ENCODE measurements at regions of chr15 and their contacts with region 1.

Region 1: GRCh38 chr15:89496155-89497098 is at the start of gene RHCG:
- DNase-seq: peak; percentile 82 to 85
- H3K4me3 ChIP-seq: peak within 1 kb of the TSS; percentile 40
- H3K4me3 Mint-ChIP-seq: peak within 1 kb of the TSS; percentile 68
- H3K27ac Mint-ChIP-seq: no peak within 1 kb of the TSS
- H3K4me1 ChIP-seq: no peaks in the 10 kb centered on the region
- H3K4me1 Mint-ChIP-seq: no peaks in the 10 kb centered on the region
- H3K27me3 ChIP-seq: no peaks in the 10 kb centered on the region
- H3K27me3 Mint-ChIP-seq: no peaks in the 10 kb centered on the region
- CTCF ChIP-seq: peak; percentile 60 to 85
- total RNA-seq, gene RHCG: not detected in 2 replicates

Region 2: GRCh38 chr15:88513195-88513594 is 983.2 kb before region 1 on chr15:
- CTCF ChIA-PET with region 1: no interaction called
- POLR2A ChIA-PET with region 1: no interaction called
- intact Hi-C with region 1: no loop called
- DNase-seq: no peak
- H3K4me3 ChIP-seq: no peak overlapping the region
- H3K4me3 Mint-ChIP-seq: no peak overlapping the region
- H3K27ac Mint-ChIP-seq: no peak overlapping the region
- H3K4me1 ChIP-seq: no peaks in the 10 kb centered on the region
- H3K4me1 Mint-ChIP-seq: no peaks in the 10 kb centered on the region
- H3K27me3 ChIP-seq: no peaks in the 10 kb centered on the region
- H3K27me3 Mint-ChIP-seq: no peaks in the 10 kb centered on the region
- CTCF ChIP-seq: no peak

Region 3: GRCh38 chr15:89087830-89088604 is 408.4 kb before region 1 on chr15 and contains the start of gene ABHD2:
- CTCF ChIA-PET with region 1: no interaction called
- POLR2A ChIA-PET with region 1: no interaction called
- intact Hi-C with region 1: no loop called
- DNase-seq: peak; percentile 98 to 99
- H3K4me3 ChIP-seq: peak within 1 kb of the TSS; percentile 61
- H3K4me3 Mint-ChIP-seq: no peak within 1 kb of the TSS
- H3K27ac Mint-ChIP-seq: no peak within 1 kb of the TSS
- H3K4me1 ChIP-seq: peaks cover 14% of the 10 kb centered on the region; the same call in 1 of the 2 replicates
- H3K4me1 Mint-ChIP-seq: peaks cover 8% of the 10 kb centered on the region
- H3K27me3 ChIP-seq: no peaks in the 10 kb centered on the region
- H3K27me3 Mint-ChIP-seq: no peaks in the 10 kb centered on the region
- CTCF ChIP-seq: no peak
- total RNA-seq, gene ABHD2: 56.4 and 63.0 TPM in 2 replicates

Region 4: DNA sequence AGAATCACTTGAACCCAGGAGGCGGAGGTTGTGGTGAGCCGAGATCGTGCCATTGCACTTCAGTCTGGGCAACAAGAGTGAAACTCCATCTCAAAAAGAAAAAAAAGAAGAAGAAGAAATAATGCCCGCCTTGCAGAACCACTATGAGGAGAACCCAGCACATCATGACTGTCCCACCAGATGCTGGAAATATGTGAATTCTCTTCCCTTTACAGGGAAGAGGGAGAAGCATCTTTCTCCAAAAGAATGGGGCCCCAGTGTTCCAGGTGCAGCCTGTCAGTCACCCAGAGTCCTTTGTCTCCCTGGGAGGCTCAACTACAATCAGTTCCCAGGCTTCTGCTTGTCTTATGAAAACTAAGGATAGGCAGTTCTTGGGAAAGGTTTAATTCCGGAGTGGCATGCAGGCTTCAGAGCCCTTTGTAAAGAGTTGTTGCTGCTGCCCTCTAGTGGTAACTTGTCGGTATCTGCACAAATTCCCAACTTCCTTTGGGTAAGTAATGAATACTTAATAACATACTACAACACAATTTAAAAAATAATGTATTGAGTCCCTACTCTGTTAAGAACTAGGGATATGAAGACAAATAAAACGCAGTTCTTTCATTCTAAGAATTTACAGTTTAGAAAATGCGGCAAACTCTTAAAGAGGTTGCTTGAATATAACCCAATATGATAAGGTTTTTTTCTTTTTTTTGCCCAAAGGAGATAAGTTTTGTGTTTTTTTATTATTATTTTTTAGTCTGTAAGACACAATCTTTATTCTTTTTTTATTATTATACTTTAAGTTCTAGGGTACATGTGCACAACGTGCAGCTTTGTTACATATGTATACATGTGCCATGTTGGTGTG is 60.2 kb after region 1 on chr15:
- CTCF ChIA-PET with region 1: no interaction called
- POLR2A ChIA-PET with region 1: no interaction called
- intact Hi-C with region 1: loop called (anchors 1 kb)
- DNase-seq: peak; percentile 68 to 69
- H3K4me3 ChIP-seq: no peak overlapping the region
- H3K4me3 Mint-ChIP-seq: no peak overlapping the region
- H3K27ac Mint-ChIP-seq: no peak overlapping the region
- H3K4me1 ChIP-seq: peaks cover 4% of the 10 kb centered on the region; the same call in 1 of the 2 replicates
- H3K4me1 Mint-ChIP-seq: no peaks in the 10 kb centered on the region
- H3K27me3 ChIP-seq: no peaks in the 10 kb centered on the region
- H3K27me3 Mint-ChIP-seq: no peaks in the 10 kb centered on the region
- CTCF ChIP-seq: peak; percentile 61 to 74

Region 5: DNA sequence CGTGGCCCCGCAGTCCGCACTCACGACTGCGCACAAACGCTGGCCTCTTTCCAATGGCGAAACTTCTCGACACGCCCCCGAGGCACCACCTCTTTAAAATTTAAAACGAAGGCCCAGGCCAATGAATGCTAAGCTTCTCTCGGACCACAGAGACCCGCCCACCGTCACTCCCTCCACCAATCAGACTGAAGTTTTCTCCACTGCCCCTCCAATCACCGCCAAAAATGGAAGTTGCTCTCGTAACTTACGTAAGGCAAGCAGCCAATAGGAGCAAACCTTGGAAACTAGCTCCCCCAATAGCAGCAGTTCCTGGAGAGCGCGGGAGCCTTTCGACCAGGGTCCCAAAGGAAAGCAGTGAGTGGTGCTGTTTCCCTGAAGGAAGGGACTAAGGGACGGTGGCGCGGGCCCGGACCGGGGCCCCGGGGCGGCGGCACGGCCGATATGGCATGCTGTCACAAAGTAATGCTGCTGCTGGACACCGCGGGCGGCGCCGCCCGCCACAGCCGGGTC is 78.8 kb after region 1 on chr15 and contains the start of gene TICRR:
- CTCF ChIA-PET with region 1: interaction called, 12 read pairs
- POLR2A ChIA-PET with region 1: interaction called, 5 read pairs
- intact Hi-C with region 1: no loop called
- DNase-seq: peak; percentile 97 to 99
- H3K4me3 ChIP-seq: peak within 1 kb of the TSS; percentile 62
- H3K4me3 Mint-ChIP-seq: peak within 1 kb of the TSS; percentile 79
- H3K27ac Mint-ChIP-seq: peak within 1 kb of the TSS; percentile 77
- H3K4me1 ChIP-seq: peaks cover 7% of the 10 kb centered on the region; the same call in 1 of the 2 replicates
- H3K4me1 Mint-ChIP-seq: peaks cover 18% of the 10 kb centered on the region
- H3K27me3 ChIP-seq: no peaks in the 10 kb centered on the region
- H3K27me3 Mint-ChIP-seq: peaks cover 3% of the 10 kb centered on the region
- CTCF ChIP-seq: no peak
- total RNA-seq, gene TICRR: 23.6 and 24.1 TPM in 2 replicates